ENCODE measurements at regions of chr13 and their contacts with region 1.

Region 1: DNA sequence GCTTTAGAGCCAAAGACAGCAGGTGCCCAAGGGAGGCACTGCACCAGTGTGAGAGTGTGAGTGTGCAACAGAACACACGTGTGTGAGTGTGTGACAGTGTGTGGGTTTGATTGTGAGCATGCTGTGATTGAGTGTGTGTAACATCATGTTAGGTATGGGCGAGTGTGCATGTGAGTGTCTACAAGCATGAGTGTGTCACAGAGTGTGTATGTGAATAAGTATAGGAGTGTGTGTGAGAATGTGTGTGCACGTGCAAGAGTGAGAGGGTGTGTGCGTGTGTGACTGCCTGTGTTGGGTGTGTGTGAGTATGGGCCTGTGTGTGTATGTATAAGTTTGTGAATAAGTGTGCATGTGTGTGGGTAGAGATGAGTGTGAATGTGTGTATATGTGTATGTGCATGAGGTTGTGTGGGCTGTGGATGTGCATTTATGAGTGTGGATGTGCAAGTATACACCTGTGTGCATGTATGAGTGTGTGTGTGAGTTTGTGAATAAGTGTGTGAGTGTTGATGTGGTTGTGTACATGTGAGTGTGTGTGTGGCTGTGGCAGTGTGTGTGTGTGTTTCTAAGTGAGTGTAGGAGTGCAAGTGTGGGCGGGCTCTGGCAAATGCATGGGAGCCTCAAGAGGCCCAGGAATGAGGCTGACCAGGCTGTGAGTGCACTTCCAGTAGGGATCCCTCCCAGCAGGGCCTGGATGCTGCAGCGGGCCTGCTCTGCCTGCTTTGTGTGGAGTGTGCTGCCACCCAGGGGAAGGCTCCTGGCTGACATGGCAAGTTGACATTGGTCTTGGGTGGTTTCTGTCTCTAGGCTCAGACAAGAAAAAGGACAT is 198.4 kb downstream of the COL4A1 start:
- DNase-seq: no peak
- H3K4me3 ChIP-seq: no peak overlapping the region
- H3K27ac ChIP-seq: peak overlapping the region; percentile 4 to 60 (median 26)
- H3K4me1 ChIP-seq: peaks cover 0 to 19% (median 11%) of the 10 kb centered on the region in 3 donors
- H3K27me3 ChIP-seq: no peaks in the 10 kb centered on the region
- CTCF ChIP-seq: peak; percentile 25 to 82 (median 58)
- POLR2A ChIP-seq: no peak

Region 2: GRCh38 chr13:108957369-108958012 is 1151.1 kb before region 1 on chr13:
- intact Hi-C with region 1: loop called (anchors 10 kb)
- DNase-seq: no peak
- H3K4me3 ChIP-seq: no peak overlapping the region
- H3K27ac ChIP-seq: no peak overlapping the region
- H3K4me1 ChIP-seq: peaks cover 5 to 7% (median 5%) of the 10 kb centered on the region in 3 donors
- H3K27me3 ChIP-seq: no peaks in the 10 kb centered on the region
- CTCF ChIP-seq: no peak
- POLR2A ChIP-seq: no peak

Region 3: GRCh38 chr13:109784221-109784894 is 324.2 kb before region 1 on chr13:
- intact Hi-C with region 1: loop called (anchors 5 kb)
- DNase-seq: no peak
- H3K4me3 ChIP-seq: peak overlapping the region; percentile 36 to 84 (median 64)
- H3K27ac ChIP-seq: peak overlapping the region; percentile 40 to 99 (median 90)
- H3K4me1 ChIP-seq: peaks cover 7 to 80% (median 31%) of the 10 kb centered on the region in 3 donors
- H3K27me3 ChIP-seq: peaks cover 0 to 15% (median 0%) of the 10 kb centered on the region in 4 donors
- CTCF ChIP-seq: peak in 5 of 6 experiments; percentile 29 to 87 (median 78)
- POLR2A ChIP-seq: no peak

Region 4: GRCh38 chr13:110397436-110398115 is 289.0 kb after region 1 on chr13:
- intact Hi-C with region 1: no loop called
- DNase-seq: no peak
- H3K4me3 ChIP-seq: peak overlapping the region in 3 of 4 donors; percentile 5 to 49 (median 11)
- H3K27ac ChIP-seq: peak overlapping the region; percentile 68 to 93 (median 86)
- H3K4me1 ChIP-seq: peaks cover 0 to 49% (median 9%) of the 10 kb centered on the region in 3 donors
- H3K27me3 ChIP-seq: no peaks in the 10 kb centered on the region
- CTCF ChIP-seq: no peak
- POLR2A ChIP-seq: no peak